Ascending aorta (tissue), 2 donors: ENCODE measurements at regions of chr4 and their contacts with region 1.

Region 1: GRCh38 chr4:139554893-139555704 is 920 bp downstream of the SETD7 start:
- DNase-seq: peak; percentile 74 to 95
- H3K4me3 ChIP-seq: peak overlapping the region; percentile 82 to 99
- H3K27ac ChIP-seq: peak overlapping the region; percentile 99 to 100
- H3K4me1 ChIP-seq: peaks cover 0 to 30% of the 10 kb centered on the region in 2 donors
- H3K27me3 ChIP-seq: no peaks in the 10 kb centered on the region
- CTCF ChIP-seq: no peak

Region 2: DNA sequence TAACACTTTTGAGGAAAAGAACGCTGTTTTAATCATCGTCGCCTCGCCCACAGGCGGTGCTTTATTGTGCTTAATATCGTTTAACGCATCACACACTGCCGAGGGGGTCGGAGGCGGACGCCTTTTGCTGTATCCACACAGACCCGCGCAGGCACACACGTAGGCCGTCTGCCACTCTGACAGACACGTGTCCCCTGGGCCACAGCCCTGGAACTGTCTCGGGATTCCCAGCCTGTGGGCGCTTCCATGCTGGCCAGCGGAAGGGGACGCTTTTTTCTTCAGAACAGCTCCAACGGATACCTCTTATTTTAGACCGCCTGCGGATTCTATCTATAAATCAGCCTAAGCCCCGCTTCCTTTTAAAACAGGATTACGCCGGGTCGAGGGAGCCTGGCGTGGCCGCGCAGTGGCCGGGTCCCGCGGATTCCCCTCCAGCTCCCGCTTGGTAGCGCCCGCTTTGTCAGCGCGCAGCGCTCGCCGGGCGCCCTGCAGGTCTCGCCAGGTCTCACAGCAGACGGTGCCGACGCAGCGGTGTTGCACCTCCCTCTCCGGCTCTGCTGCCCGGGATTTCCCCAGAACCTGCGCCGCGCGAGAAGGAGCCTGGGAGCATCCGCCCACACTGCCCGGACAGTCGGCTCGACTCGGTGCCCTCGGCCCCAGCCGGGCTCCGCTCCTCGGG is 539.7 kb before region 1 on chr4 and contains the start of gene NOCT:
- intact Hi-C with region 1: loop called (anchors 1 kb)
- DNase-seq: peak; percentile 67 to 92
- H3K4me3 ChIP-seq: peak within 1 kb of the TSS; percentile 80 to 81
- H3K27ac ChIP-seq: peak within 1 kb of the TSS; percentile 83 to 96
- H3K4me1 ChIP-seq: peaks cover 0 to 8% of the 10 kb centered on the region in 2 donors
- H3K27me3 ChIP-seq: no peaks in the 10 kb centered on the region
- CTCF ChIP-seq: peak; percentile 13 to 32 (median 24)
- total RNA-seq, gene NOCT: 9.9 TPM

Region 3: DNA sequence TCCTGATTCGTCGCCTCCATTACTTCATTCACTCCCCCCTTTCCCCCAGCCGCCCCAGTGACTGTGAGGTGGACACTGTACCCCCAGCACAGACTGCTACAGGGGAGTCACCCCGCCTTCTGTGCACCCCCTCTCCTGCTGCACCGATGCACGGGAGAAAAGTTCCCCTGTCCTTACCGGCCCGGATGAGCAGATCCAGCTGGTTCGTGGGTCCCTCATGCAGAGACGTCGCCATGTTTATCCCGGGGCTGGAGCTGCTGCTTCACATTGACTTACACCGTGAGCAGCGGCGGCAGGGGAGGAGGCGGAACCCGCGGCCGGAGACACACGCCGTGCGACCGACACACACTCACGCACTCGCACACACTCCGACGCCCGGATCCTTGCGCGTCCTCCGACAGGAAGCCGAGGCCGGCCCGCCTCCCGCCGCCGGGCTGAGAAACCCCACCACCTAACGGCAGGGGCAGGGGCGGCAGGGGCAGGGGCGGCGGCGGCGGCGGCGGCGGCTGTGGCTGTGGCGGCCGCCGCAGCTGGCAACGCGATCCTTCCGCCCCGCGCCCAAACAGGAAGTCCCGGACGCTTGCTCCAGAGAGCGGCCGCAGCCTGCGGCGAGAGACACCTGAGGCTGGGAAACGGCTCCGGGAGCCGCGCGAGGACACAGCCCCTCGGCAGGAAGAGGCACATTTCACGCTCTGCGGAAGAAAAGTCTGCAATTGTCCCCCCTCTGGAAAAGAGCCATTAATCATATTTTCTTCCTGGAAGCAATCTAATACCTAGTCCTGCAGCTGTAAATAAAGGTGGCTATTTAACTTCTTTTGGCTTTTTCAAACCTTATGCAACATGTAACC is 470.9 kb before region 1 on chr4:
- intact Hi-C with region 1: loop called (anchors 10 kb)
- DNase-seq: peak; percentile 60 to 93
- H3K4me3 ChIP-seq: peak overlapping the region; percentile 83 to 92
- H3K27ac ChIP-seq: peak overlapping the region; percentile 81 to 97
- H3K4me1 ChIP-seq: peaks cover 0 to 6% of the 10 kb centered on the region in 2 donors
- H3K27me3 ChIP-seq: no peaks in the 10 kb centered on the region
- CTCF ChIP-seq: peak in 2 of 3 experiments; percentile 25 to 40

Region 4: GRCh38 chr4:139501927-139502899 is 52.9 kb before region 1 on chr4:
- intact Hi-C with region 1: loop called (anchors 2 kb)
- DNase-seq: no peak
- H3K4me3 ChIP-seq: no peak overlapping the region
- H3K27ac ChIP-seq: no peak overlapping the region
- H3K4me1 ChIP-seq: no peaks in the 10 kb centered on the region
- H3K27me3 ChIP-seq: no peaks in the 10 kb centered on the region
- CTCF ChIP-seq: no peak

Region 5: GRCh38 chr4:139515531-139515958 is 39.6 kb before region 1 on chr4:
- intact Hi-C with region 1: loop called (anchors 5 kb)
- DNase-seq: no peak
- H3K4me3 ChIP-seq: no peak overlapping the region
- H3K27ac ChIP-seq: no peak overlapping the region
- H3K4me1 ChIP-seq: no peaks in the 10 kb centered on the region
- H3K27me3 ChIP-seq: no peaks in the 10 kb centered on the region
- CTCF ChIP-seq: no peak

Region 6: GRCh38 chr4:139540632-139541031 is 14.5 kb before region 1 on chr4:
- intact Hi-C with region 1: loop called (anchors 2 kb)
- DNase-seq: no peak
- H3K4me3 ChIP-seq: no peak overlapping the region
- H3K27ac ChIP-seq: no peak overlapping the region
- H3K4me1 ChIP-seq: peaks cover 0 to 2% of the 10 kb centered on the region in 2 donors
- H3K27me3 ChIP-seq: no peaks in the 10 kb centered on the region
- CTCF ChIP-seq: no peak

Region 7: GRCh38 chr4:139794158-139794954 is 239.3 kb after region 1 on chr4:
- intact Hi-C with region 1: no loop called
- DNase-seq: no peak
- H3K4me3 ChIP-seq: no peak overlapping the region
- H3K27ac ChIP-seq: no peak overlapping the region
- H3K4me1 ChIP-seq: no peaks in the 10 kb centered on the region
- H3K27me3 ChIP-seq: no peaks in the 10 kb centered on the region
- CTCF ChIP-seq: no peak

Region 8: GRCh38 chr4:140373328-140374129 is 818.4 kb after region 1 on chr4 and contains the start of gene SCOC:
- intact Hi-C with region 1: loop called (anchors 10 kb)
- DNase-seq: peak; percentile 99 to 100
- H3K4me3 ChIP-seq: peak within 1 kb of the TSS; percentile 93 to 99
- H3K27ac ChIP-seq: peak within 1 kb of the TSS; percentile 92 to 94
- H3K4me1 ChIP-seq: peaks cover 8 to 15% of the 10 kb centered on the region in 2 donors
- H3K27me3 ChIP-seq: no peaks in the 10 kb centered on the region
- CTCF ChIP-seq: no peak
- total RNA-seq, gene SCOC: 7.2 TPM